PC-9 (cell line): ENCODE measurements at regions of chr6 and their contacts with region 1.

Region 1: GRCh38 chr6:13407709-13408695 is 79.4 kb downstream of the GFOD1 start:
- DNase-seq: peak; percentile 81 to 98
- H3K4me3 ChIP-seq: no peak overlapping the region
- H3K27ac ChIP-seq: peak overlapping the region; percentile 89
- H3K4me1 ChIP-seq: peaks cover 29% of the 10 kb centered on the region
- H3K27me3 ChIP-seq: no peaks in the 10 kb centered on the region
- CTCF ChIP-seq: no peak

Region 2: GRCh38 chr6:13355043-13355951 is 52.7 kb before region 1 on chr6:
- CTCF ChIA-PET with region 1: interaction called, 4 read pairs
- POLR2A ChIA-PET with region 1: no interaction called
- intact Hi-C with region 1: loop called (anchors 1 kb)
- DNase-seq: peak; percentile 63 to 99
- H3K4me3 ChIP-seq: peak overlapping the region; percentile 10; the same call in 1 of the 2 replicates
- H3K27ac ChIP-seq: peak overlapping the region; percentile 74
- H3K4me1 ChIP-seq: peaks cover 38% of the 10 kb centered on the region
- H3K27me3 ChIP-seq: no peaks in the 10 kb centered on the region
- CTCF ChIP-seq: no peak

Region 3: DNA sequence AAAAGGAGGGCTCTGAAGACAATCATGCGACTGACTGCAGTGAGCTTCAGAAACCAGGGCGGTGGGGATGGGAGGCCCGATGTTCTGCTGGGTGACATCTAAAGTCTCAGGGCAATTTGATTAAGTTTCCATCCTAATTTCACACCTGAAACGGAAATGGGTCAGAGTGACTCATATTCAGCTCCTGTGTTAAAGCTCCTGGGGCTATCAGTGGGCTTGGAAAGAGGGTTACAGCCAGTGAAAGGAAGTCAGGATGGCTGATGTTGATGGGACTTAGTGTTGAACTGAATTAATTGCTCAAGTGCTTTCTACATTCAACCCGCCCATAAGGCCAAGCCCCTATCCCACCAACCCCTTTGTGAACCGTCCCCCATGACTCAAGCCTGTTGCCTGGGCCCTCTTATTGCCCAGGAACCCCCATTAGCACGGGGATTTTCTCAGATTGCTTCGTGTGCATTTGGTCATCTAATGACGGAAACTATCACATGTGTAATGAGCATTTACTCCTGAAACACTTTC is 32.6 kb before region 1 on chr6:
- CTCF ChIA-PET with region 1: no interaction called
- POLR2A ChIA-PET with region 1: no interaction called
- intact Hi-C with region 1: no loop called
- DNase-seq: no peak
- H3K4me3 ChIP-seq: no peak overlapping the region
- H3K27ac ChIP-seq: no peak overlapping the region
- H3K4me1 ChIP-seq: no peaks in the 10 kb centered on the region; the same call in 1 of the 2 replicates
- H3K27me3 ChIP-seq: no peaks in the 10 kb centered on the region
- CTCF ChIP-seq: no peak

Region 4: DNA sequence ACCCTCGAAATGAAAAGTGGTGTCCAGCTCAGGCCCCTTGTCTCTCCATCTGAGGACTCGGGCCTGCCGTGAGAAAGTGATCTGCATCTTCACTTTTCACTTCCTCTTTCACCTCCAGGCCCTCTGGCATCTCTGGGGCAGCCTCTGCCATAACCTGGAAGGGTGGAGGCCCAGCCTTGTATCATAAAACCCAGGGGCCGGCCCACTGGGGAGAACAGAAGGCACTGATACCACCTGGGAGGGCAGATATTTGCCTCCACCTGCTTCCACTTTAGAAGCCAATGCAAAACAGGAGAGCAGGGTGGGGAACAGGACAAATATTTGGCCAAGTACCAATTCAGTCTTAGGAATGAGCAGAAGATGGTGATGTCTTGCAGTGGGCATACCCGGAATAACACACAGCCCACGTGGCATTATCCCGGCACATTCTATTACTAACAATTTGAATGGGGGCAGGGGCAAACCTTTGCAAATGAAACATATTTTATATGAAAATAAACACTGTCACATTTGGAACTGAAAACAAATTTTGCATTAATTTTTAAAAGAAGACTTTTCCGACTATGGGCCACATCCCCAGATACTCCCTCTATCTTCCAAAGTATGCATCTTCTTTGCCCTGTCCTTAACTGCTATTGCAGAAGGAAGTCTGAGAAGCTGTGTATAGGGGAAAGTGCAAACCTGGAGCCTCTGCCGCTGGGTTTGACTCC is 10.5 kb before region 1 on chr6:
- CTCF ChIA-PET with region 1: interaction called, 5 read pairs
- POLR2A ChIA-PET with region 1: no interaction called
- intact Hi-C with region 1: loop called (anchors 1 kb)
- DNase-seq: peak in 1 of 2 experiments; percentile 57
- H3K4me3 ChIP-seq: no peak overlapping the region
- H3K27ac ChIP-seq: peak overlapping the region; percentile 76
- H3K4me1 ChIP-seq: peaks cover 49% of the 10 kb centered on the region
- H3K27me3 ChIP-seq: no peaks in the 10 kb centered on the region
- CTCF ChIP-seq: no peak; the same call in 1 of the 2 replicates

Region 5: GRCh38 chr6:13427801-13428582 is 20.0 kb after region 1 on chr6:
- CTCF ChIA-PET with region 1: no interaction called
- POLR2A ChIA-PET with region 1: no interaction called
- intact Hi-C with region 1: no loop called
- DNase-seq: no peak
- H3K4me3 ChIP-seq: no peak overlapping the region
- H3K27ac ChIP-seq: no peak overlapping the region
- H3K4me1 ChIP-seq: 0 out of 2 replicates have a peak, but pooled peaks cover 6% of the 10 kb centered on the region
- H3K27me3 ChIP-seq: no peaks in the 10 kb centered on the region
- CTCF ChIP-seq: no peak

Region 6: DNA sequence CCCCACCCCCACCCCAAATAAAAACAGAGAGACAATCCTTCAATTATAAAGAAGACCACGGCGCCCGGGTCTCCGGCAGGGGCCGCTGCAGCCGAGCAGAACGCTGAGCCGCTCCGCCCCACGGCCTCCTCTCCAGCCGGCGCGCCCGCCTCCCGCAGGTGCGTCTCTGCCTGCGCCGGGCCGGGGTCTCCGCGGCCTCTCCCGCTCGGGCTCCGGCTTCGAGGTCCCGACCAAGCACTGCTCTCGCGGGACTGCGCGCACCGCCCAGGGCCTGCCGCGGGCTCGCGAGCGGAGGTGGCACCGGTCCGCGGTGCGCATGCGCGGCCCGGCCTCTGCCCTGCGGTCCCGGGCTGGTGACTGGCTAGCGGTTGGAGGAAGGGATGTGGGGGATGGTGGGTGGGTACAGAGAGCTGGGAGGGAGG is 166.2 kb after region 1 on chr6:
- CTCF ChIA-PET with region 1: no interaction called
- POLR2A ChIA-PET with region 1: interaction called, 5 read pairs
- intact Hi-C with region 1: loop called (anchors 2 kb)
- DNase-seq: peak; percentile 80 to 96
- H3K4me3 ChIP-seq: peak overlapping the region; percentile 92
- H3K27ac ChIP-seq: peak overlapping the region; percentile 96
- H3K4me1 ChIP-seq: peaks cover 17% of the 10 kb centered on the region
- H3K27me3 ChIP-seq: no peaks in the 10 kb centered on the region
- CTCF ChIP-seq: peak; percentile 52